Transverse colon (tissue), 4 donors: ENCODE measurements at regions of chr13 and their contacts with region 1.

Region 1: DNA sequence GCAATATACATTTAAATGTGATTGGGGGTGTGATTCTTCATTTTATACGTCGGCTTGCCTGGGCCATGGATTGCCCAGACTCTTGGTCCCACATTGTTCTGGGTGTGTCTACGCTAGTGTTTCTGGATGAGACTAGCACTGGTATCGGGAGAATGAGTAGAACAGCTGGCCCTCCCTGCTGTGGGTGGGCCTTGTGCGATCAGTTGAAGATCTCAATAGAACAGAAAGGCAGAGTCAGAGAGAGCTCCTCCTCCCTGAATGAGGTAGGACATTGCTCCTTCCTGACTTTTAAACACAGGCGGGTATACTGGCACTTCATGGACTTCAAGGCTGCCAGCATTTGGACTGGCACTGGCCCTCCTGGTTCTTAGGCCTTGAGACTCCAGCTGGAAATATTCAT is 603.0 kb downstream of the LIG4 start:
- DNase-seq: no peak
- H3K4me3 ChIP-seq: no peak overlapping the region
- H3K27ac ChIP-seq: no peak overlapping the region
- H3K4me1 ChIP-seq: no peaks in the 10 kb centered on the region
- H3K27me3 ChIP-seq: no peaks in the 10 kb centered on the region
- CTCF ChIP-seq: no peak
- EP300 ChIP-seq: no peak
- POLR2A ChIP-seq: no peak

Region 2: DNA sequence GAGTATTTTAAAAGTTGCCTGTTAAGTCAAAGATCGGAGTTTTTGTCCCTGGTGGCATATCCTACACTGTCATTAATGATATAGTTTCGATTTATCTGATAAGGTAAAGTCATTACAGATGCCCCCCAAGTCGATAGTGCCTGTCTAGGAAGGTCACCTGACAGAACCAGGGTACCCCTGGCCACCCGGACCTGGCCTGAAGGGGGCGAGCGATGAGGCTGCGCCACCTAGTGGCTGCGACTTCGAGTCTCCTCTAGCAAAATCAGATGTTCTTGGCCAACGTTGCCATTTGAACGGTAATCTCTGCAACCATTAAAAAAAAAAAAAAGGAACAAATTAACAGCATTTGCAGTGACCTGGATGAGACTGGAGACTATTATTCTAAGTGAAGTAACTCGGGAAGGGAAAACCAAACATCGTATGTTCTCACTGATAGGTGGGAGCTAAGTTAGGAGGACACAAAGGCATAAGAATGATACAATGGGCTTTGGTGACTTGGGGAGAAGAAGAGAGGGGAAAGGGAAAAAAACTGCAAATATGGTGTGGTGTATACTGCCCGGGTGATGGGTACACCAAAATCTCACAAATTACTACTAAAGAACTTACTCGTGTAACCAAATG is 37.8 kb after region 1 on chr13:
- in situ Hi-C with region 1: no loop called
- intact Hi-C with region 1: no loop called
- DNase-seq: peak; percentile 13
- H3K4me3 ChIP-seq: no peak overlapping the region
- H3K27ac ChIP-seq: no peak overlapping the region
- H3K4me1 ChIP-seq: no peaks in the 10 kb centered on the region
- H3K27me3 ChIP-seq: no peaks in the 10 kb centered on the region
- CTCF ChIP-seq: peak; percentile 39 to 58 (median 55)
- EP300 ChIP-seq: no peak
- POLR2A ChIP-seq: no peak

Region 3: DNA sequence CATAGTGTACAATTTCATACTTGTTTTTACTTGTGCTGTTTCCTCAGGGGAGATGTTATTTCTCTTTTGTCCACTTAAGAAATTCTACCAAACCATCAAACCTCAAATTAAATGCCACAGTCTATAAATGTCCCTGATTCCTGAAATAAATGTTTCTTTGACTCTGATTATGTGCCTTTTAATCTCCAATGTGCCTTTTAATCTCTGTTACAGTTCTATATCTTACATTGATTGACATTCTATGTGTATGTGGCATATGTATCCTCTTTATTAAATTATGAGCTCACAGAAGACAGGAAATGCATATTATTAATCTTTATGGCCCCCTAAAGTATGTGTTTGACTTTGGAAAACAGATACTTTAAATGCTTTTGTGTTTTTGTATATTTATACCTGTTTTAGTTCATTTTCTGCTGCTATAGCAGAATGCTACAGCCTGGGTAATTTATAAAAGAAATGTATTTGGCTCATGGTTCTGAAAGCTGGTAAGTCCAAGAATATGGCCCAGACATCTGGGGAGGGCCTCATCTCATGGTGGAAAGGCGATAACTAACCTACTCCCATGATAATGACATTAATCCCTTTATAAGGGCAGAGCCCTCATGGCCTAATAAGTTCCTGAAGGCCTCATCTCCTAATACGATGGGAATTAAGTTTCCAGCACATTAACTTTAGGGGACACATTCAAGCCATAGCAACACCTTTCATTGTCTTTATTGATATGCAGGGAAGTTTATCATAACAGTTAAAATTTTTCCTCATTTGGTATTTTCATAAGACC is 199.0 kb after region 1 on chr13:
- in situ Hi-C with region 1: no loop called
- intact Hi-C with region 1: loop called (anchors 5 kb)
- DNase-seq: no peak
- H3K4me3 ChIP-seq: no peak overlapping the region
- H3K27ac ChIP-seq: no peak overlapping the region
- H3K4me1 ChIP-seq: no peaks in the 10 kb centered on the region
- H3K27me3 ChIP-seq: no peaks in the 10 kb centered on the region
- CTCF ChIP-seq: no peak
- EP300 ChIP-seq: no peak
- POLR2A ChIP-seq: no peak